Endothelial cell of umbilical vein (primary cell): ENCODE measurements at regions of chr18 and their contacts with region 1.

Region 1: GRCh38 chr18:25832001-25832604 is 258.3 kb downstream of the SS18 start:
- DNase-seq: peak; percentile 73
- H3K4me3 ChIP-seq: no peak overlapping the region
- H3K27ac ChIP-seq: no peak overlapping the region
- H3K4me1 ChIP-seq: peaks cover 4% of the 10 kb centered on the region
- H3K27me3 ChIP-seq: peaks cover 0 to 5% of the 10 kb centered on the region in 2 experiments
- CTCF ChIP-seq: peak; percentile 83 to 96
- POLR2A ChIP-seq: no peak

Region 2: DNA sequence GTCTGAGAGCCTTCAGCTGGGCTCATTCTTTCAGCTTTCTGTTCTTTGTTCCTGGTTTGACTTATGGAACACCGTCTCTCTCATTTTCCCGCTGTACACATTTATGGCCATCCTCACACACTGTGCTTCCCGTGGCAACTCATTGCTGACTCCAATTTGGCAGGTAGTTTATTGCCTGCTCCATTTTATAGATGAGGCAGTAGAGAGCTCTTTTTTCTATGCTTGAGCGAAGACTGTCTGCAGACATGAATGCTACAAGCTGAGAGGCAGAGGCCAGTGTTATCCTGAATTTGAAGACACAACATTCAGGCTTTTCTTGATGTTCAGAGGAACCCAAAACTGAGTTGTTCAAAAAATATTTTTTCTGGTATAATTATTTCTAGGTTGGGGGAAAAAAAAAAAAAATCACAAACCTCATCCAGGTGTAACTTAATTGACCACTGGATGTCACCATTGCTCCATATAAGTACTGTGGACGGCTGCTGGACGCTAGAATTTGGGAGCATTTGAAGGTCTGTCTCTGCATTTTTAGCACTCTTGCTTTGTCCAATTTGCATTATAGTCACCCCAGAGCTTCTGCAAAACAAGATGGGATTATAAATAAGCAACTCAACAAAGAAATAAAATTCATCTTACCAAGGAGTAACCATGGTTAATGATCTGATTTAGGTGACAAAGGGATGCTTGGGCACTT is 1288.2 kb before region 1 on chr18:
- CTCF ChIA-PET with region 1: interaction called, 9 read pairs
- POLR2A ChIA-PET with region 1: no interaction called
- dilution Hi-C with region 1: no loop called
- intact Hi-C with region 1: loop called (anchors 1 kb)
- DNase-seq: peak; percentile 42
- H3K4me3 ChIP-seq: no peak overlapping the region
- H3K27ac ChIP-seq: no peak overlapping the region
- H3K4me1 ChIP-seq: no peaks in the 10 kb centered on the region
- H3K27me3 ChIP-seq: peaks cover 5 to 7% of the 10 kb centered on the region in 2 experiments
- CTCF ChIP-seq: peak; percentile 30 to 32
- POLR2A ChIP-seq: no peak

Region 3: GRCh38 chr18:24878289-24878688 is 953.8 kb before region 1 on chr18:
- CTCF ChIA-PET with region 1: interaction called, 12 read pairs
- POLR2A ChIA-PET with region 1: no interaction called
- dilution Hi-C with region 1: no loop called
- intact Hi-C with region 1: loop called (anchors 1 kb)
- DNase-seq: peak; percentile 75
- H3K4me3 ChIP-seq: no peak overlapping the region
- H3K27ac ChIP-seq: no peak overlapping the region
- H3K4me1 ChIP-seq: peaks cover 11% of the 10 kb centered on the region
- H3K27me3 ChIP-seq: no peaks in the 10 kb centered on the region
- CTCF ChIP-seq: peak; percentile 23 to 44
- POLR2A ChIP-seq: no peak

Region 4: DNA sequence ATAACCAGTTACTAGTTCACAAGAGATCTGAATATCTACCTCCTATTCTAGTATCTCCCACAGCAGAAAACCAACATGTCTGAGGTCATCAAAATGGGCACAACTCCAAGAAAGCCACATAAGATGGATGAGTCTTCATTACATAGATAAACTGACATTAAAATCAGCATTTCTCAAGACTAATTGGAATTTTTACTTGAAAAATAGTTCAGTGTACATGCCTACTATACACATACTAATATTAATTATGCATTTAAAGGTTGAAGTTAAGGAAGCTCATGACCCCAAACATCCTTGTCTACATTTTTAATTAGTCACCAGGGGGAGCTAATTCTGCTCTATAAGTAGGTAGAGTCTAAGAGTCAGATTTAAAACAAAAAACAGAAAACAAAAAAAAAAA is 522.1 kb before region 1 on chr18:
- CTCF ChIA-PET with region 1: no interaction called
- POLR2A ChIA-PET with region 1: no interaction called
- dilution Hi-C with region 1: no loop called
- intact Hi-C with region 1: loop called (anchors 5 kb)
- DNase-seq: peak; percentile 75
- H3K4me3 ChIP-seq: no peak overlapping the region
- H3K27ac ChIP-seq: no peak overlapping the region
- H3K4me1 ChIP-seq: peaks cover 35% of the 10 kb centered on the region
- H3K27me3 ChIP-seq: no peaks in the 10 kb centered on the region
- CTCF ChIP-seq: peak in 1 of 2 donors; percentile 1
- POLR2A ChIP-seq: no peak

Region 5: DNA sequence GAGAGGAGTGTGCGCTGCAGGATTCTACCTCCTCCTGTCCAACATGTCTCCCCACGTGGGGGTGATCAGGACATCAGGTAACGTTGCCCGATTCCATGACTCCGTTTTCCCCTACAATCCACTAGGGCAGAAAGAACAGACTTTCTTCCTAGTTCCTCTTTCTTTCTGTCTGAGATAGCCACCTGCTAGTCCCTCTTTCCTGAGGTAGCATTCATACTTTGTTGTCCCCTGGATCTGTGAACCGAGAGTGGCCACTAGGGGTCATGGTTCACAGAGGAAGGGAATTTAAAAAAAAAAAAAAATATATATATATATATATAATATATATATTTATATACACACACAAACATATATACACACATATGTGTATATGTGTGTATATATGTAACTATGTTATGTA is 270.2 kb before region 1 on chr18:
- CTCF ChIA-PET with region 1: no interaction called
- POLR2A ChIA-PET with region 1: no interaction called
- dilution Hi-C with region 1: no loop called
- intact Hi-C with region 1: loop called (anchors 1 kb)
- DNase-seq: peak; percentile 15
- H3K4me3 ChIP-seq: no peak overlapping the region
- H3K27ac ChIP-seq: no peak overlapping the region
- H3K4me1 ChIP-seq: peaks cover 7% of the 10 kb centered on the region
- H3K27me3 ChIP-seq: peaks cover 0 to 2% of the 10 kb centered on the region in 2 experiments
- CTCF ChIP-seq: peak in 1 of 2 donors; percentile 15
- POLR2A ChIP-seq: no peak

Region 6: GRCh38 chr18:26159353-26159752 is 327.2 kb after region 1 on chr18:
- CTCF ChIA-PET with region 1: no interaction called
- POLR2A ChIA-PET with region 1: no interaction called
- dilution Hi-C with region 1: no loop called
- intact Hi-C with region 1: no loop called
- DNase-seq: peak; percentile 6
- H3K4me3 ChIP-seq: no peak overlapping the region
- H3K27ac ChIP-seq: no peak overlapping the region
- H3K4me1 ChIP-seq: no peaks in the 10 kb centered on the region
- H3K27me3 ChIP-seq: peaks cover 0 to 3% of the 10 kb centered on the region in 2 experiments
- CTCF ChIP-seq: no peak
- POLR2A ChIP-seq: no peak